SK-N-SH (cell line): ENCODE measurements at regions of chr1 and their contacts with region 1.

Region 1: GRCh38 chr1:43650310-43651085 is 549 bp downstream of the KDM4A start:
- DNase-seq: peak; percentile 99
- H3K4me3 ChIP-seq: peak overlapping the region; percentile 85 to 92
- H3K27ac ChIP-seq: peak overlapping the region; percentile 89 to 98
- H3K4me1 ChIP-seq: peaks cover 0 to 10% of the 10 kb centered on the region in 2 experiments; a peak in 2 of 4 replicates
- H3K27me3 ChIP-seq: no peaks in the 10 kb centered on the region
- CTCF ChIP-seq: no peak
- EP300 ChIP-seq: no peak
- RAD21 ChIP-seq: no peak

Region 2: DNA sequence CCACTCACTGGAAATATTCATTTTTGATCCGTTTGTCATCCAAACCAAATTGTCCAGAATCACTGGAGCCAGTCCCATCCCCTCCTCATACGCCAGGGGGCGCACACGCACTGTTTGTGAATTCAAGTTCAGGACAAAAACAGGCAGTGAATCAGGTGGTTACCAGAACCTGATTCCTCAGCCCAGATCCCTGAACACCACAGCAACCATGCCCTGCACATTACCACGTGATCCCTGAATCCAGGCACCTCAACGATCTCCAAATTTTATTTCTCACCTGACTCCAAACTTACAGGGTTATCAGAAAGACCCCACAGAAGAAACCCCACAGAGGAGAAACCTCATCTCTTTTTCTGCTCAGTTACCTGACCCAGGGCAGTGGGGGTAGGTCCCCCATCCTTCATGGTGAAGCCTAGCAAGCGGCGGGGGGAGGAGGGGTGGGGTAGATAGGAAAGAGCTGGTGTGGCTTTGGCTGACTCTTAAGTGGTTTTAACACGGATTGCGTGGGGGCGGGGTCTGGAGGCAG is 121.2 kb before region 1 on chr1:
- CTCF ChIA-PET with region 1: interaction called, 16 read pairs
- POLR2A ChIA-PET with region 1: interaction called, 10 read pairs
- DNase-seq: peak; percentile 86
- H3K4me3 ChIP-seq: peak overlapping the region in 1 of 2 experiments; percentile 45; a peak in 1 of 4 replicates
- H3K27ac ChIP-seq: no peak overlapping the region
- H3K4me1 ChIP-seq: peaks cover 4 to 24% of the 10 kb centered on the region in 2 experiments; a peak in 3 of 4 replicates
- H3K27me3 ChIP-seq: no peaks in the 10 kb centered on the region
- CTCF ChIP-seq: peak; percentile 95
- EP300 ChIP-seq: no peak
- RAD21 ChIP-seq: peak; percentile 98

Region 3: DNA sequence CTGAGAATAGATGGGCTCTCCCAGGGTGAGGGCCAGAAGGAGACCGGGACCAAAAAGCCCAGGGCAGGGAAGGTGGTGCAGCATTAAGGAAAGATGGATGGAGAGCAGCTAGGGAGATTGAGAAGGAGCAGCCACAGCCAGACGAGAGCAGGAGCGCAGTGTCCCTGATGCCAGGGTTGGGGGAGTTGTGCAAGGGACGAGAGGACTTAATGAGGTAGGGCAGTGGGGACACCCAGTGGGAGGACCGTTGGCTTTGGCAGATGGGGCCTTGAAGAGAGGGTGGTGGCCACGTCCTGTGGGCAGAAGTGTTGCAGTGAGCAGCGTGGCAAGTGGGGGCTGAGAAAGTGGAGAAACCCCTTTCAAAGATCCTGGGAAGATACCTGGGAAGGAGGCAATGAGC is 38.5 kb before region 1 on chr1:
- CTCF ChIA-PET with region 1: no interaction called
- POLR2A ChIA-PET with region 1: no interaction called
- DNase-seq: no peak
- H3K4me3 ChIP-seq: no peak overlapping the region
- H3K27ac ChIP-seq: no peak overlapping the region
- H3K4me1 ChIP-seq: no peaks in the 10 kb centered on the region; a peak in 1 of 4 replicates
- H3K27me3 ChIP-seq: no peaks in the 10 kb centered on the region
- CTCF ChIP-seq: no peak
- EP300 ChIP-seq: no peak
- RAD21 ChIP-seq: no peak

Region 4: DNA sequence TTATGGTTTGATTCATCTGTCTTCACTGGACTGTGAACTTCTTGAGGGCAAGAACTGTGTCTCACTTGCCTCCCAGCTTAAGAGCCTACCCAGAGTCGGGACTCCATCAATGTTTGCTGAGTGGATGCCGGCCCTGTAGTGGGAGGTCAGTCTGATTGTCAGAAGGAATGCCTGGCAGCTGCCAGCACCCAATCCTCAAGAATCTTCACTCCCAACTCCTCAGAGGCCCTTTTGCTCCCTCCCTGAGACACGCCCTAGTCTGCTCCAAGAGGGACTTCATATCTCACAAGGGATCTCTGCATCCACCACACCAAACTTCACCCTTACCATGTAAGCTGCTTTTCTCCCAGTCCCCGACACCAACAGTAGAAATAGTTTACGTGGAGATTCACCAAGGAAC is 15.8 kb before region 1 on chr1:
- CTCF ChIA-PET with region 1: interaction called, 4 read pairs
- POLR2A ChIA-PET with region 1: interaction called, 10 read pairs
- DNase-seq: no peak
- H3K4me3 ChIP-seq: no peak overlapping the region
- H3K27ac ChIP-seq: no peak overlapping the region
- H3K4me1 ChIP-seq: no peaks in the 10 kb centered on the region
- H3K27me3 ChIP-seq: no peaks in the 10 kb centered on the region
- CTCF ChIP-seq: no peak
- EP300 ChIP-seq: no peak
- RAD21 ChIP-seq: no peak

Region 5: GRCh38 chr1:43666608-43667007 is 16.1 kb after region 1 on chr1:
- CTCF ChIA-PET with region 1: interaction called, 7 read pairs
- POLR2A ChIA-PET with region 1: interaction called, 10 read pairs
- DNase-seq: no peak
- H3K4me3 ChIP-seq: no peak overlapping the region
- H3K27ac ChIP-seq: no peak overlapping the region
- H3K4me1 ChIP-seq: peaks cover 0 to 7% of the 10 kb centered on the region in 2 experiments; a peak in 1 of 4 replicates
- H3K27me3 ChIP-seq: no peaks in the 10 kb centered on the region
- CTCF ChIP-seq: no peak
- EP300 ChIP-seq: no peak
- RAD21 ChIP-seq: no peak

Region 6: GRCh38 chr1:43868741-43869067 is 218.2 kb after region 1 on chr1:
- CTCF ChIA-PET with region 1: no interaction called
- POLR2A ChIA-PET with region 1: no interaction called
- DNase-seq: no peak
- H3K4me3 ChIP-seq: no peak overlapping the region
- H3K27ac ChIP-seq: no peak overlapping the region; a peak in 1 of 4 replicates
- H3K4me1 ChIP-seq: peaks cover 3 to 16% of the 10 kb centered on the region in 2 experiments; a peak in 2 of 4 replicates
- H3K27me3 ChIP-seq: no peaks in the 10 kb centered on the region
- CTCF ChIP-seq: no peak
- EP300 ChIP-seq: no peak
- RAD21 ChIP-seq: no peak

Region 7: DNA sequence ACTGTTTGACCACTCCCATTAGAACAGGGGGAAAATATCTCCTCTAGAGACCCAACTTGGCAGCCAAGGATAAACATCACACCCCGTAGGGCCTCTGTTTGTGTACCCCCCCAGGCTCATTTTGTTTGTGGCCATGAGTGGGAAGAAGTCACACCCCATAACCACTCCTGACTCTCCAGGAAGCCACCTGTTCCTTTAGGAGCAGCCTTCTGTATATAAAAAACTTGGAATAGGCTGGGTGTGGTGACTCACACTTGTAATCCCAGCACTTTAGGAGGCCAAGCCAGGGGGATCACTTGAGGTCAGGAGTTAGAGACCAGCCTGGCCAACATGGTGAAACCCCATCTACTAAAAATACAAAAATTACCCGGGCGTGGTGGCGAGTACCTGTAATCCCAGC is 409.5 kb after region 1 on chr1:
- CTCF ChIA-PET with region 1: no interaction called
- POLR2A ChIA-PET with region 1: no interaction called
- DNase-seq: no peak
- H3K4me3 ChIP-seq: no peak overlapping the region
- H3K27ac ChIP-seq: no peak overlapping the region
- H3K4me1 ChIP-seq: no peaks in the 10 kb centered on the region
- H3K27me3 ChIP-seq: no peaks in the 10 kb centered on the region
- CTCF ChIP-seq: no peak
- EP300 ChIP-seq: no peak
- RAD21 ChIP-seq: no peak